ENCODE measurements at regions of chr17 and their contacts with region 1.

Region 1: DNA sequence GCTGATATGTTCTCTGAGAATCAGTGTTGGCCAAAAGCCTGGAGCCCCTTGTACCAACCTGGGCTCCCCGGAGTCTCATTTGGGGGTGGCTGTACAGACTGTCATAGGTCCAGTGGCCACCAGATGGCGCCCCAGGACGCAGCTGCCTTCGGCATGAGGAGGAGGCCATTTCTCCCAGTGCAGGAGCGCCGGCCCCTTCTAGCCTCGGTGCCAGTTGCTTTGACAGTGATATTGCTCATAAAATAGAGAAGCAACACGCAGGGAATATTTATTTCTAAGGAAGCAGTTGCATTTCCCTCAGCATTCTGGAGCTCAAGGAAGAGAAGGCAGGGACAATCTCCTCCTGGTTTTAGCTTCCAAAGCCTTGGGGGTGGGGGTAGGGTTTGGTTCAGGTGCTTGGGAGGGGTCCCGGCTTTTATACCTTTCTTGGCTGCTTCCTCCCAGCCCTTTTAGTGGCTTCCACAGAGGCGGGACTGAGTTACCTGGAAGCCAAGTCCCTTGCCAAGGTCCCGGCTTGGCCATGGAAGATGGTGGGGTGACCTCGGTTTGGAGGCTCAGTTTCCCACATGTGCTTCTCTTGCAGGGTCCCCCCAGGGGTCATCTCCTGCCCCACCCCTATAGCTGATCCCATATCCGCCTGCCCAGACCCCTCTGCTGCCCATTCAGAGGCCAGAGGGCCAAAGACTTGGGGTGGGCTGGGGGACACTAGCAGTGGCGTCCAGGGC is 117.8 kb upstream of the CDC42EP4 start:
- H3K4me3 ChIP-seq: no peak overlapping the region
- H3K27ac ChIP-seq: no peak overlapping the region
- H3K4me1 ChIP-seq: peaks cover 6% of the 10 kb centered on the region
- CTCF ChIP-seq: peak; percentile 83

Region 2: GRCh38 chr17:73410586-73411312 is 18.9 kb before region 1 on chr17:
- CTCF ChIA-PET with region 1: interaction called, 13 read pairs
- POLR2A ChIA-PET with region 1: no interaction called
- H3K4me3 ChIP-seq: no peak overlapping the region
- H3K27ac ChIP-seq: no peak overlapping the region
- H3K4me1 ChIP-seq: no peaks in the 10 kb centered on the region
- CTCF ChIP-seq: no peak

Region 3: DNA sequence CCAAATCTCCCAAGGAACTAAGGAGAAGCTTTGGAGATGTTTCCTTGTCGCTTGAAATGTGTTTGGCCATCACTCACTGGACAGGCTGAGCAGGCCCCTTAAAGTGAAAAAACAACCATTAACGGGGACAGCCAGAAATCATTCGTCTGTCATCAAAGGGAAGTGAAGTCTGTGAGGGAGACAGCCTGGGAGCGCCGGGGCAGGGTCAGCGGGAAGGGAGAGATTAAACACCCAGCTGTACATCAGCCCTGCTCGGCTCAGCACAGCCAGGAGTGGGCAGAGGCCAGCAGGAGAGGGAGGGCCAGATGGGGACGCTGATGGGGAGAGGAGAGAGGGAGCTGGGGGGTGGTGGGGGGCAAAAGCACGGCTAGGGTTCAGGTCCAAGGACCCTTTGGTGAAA is 109.6 kb after region 1 on chr17:
- CTCF ChIA-PET with region 1: no interaction called
- POLR2A ChIA-PET with region 1: no interaction called
- H3K4me3 ChIP-seq: no peak overlapping the region
- H3K27ac ChIP-seq: no peak overlapping the region
- H3K4me1 ChIP-seq: no peaks in the 10 kb centered on the region; the same call in 1 of the 2 replicates
- CTCF ChIP-seq: no peak

Region 4: GRCh38 chr17:73580073-73580710 is 150.6 kb after region 1 on chr17:
- CTCF ChIA-PET with region 1: interaction called, 16 read pairs
- POLR2A ChIA-PET with region 1: no interaction called
- H3K4me3 ChIP-seq: no peak overlapping the region
- H3K27ac ChIP-seq: no peak overlapping the region
- H3K4me1 ChIP-seq: peaks cover 3% of the 10 kb centered on the region; the same call in 1 of the 2 replicates
- CTCF ChIP-seq: no peak

Region 5: GRCh38 chr17:73645050-73645978 is 215.7 kb after region 1 on chr17:
- CTCF ChIA-PET with region 1: interaction called, 21 read pairs
- POLR2A ChIA-PET with region 1: interaction called, 3 read pairs
- H3K4me3 ChIP-seq: peak overlapping the region; percentile 49
- H3K27ac ChIP-seq: peak overlapping the region; percentile 18; the same call in 1 of the 2 replicates
- H3K4me1 ChIP-seq: no peaks in the 10 kb centered on the region
- CTCF ChIP-seq: peak; percentile 61; the same call in 1 of the 2 replicates

Region 6: DNA sequence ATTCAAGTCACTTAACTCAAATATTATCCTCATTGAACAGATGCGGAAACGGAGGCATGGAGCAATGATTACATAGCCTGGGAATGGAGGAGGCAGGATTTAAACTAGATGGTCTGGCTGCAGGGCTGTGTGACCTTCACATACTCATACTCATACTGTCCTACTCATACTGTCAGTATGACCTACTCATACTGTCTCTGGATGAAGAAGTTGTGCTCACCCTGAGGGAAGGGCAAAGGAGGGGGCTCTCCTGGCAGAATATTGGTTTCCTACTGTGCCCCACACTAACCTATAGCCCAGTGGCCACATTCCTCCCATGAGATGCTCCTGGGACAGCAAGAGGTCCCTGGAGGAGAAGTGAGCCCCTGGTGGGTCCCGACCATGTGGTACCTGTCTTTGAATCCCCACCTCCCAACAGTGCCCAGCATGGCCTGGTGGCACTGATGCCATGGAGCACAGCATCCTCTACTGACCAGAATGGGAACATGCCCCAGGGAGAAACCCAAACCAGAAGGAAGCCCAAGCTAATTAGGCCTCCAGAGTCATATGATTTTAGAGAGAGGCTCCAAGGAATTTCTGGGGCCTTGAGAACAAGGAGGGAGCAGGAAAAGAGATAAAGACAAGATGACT is 411.9 kb after region 1 on chr17:
- CTCF ChIA-PET with region 1: interaction called, 11 read pairs
- POLR2A ChIA-PET with region 1: no interaction called
- H3K4me3 ChIP-seq: no peak overlapping the region
- H3K27ac ChIP-seq: no peak overlapping the region
- H3K4me1 ChIP-seq: no peaks in the 10 kb centered on the region
- CTCF ChIP-seq: peak; percentile 84

Region 7: DNA sequence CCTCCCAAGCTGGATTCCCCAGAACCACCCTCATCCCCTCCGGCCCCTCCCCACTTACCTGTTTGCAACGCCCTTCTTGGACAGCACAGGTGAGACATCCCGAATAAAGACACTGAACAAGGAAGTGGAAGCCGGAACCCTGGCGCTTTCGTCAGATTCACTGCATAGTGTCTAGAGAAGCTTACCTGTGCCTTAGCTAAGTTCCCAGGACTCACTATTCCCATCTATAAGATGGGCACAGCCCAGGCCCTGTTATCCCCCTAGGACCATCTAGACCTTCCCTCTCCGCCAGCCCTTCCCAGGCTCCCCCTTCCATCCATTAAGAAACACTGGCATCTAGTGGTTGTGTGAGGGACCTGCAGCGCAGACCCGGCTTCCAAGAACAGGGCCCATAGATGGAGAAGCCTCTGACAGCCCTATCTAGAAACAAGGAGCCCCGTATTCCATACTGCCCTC is 747.0 kb after region 1 on chr17:
- CTCF ChIA-PET with region 1: interaction called, 18 read pairs
- POLR2A ChIA-PET with region 1: no interaction called
- H3K4me3 ChIP-seq: no peak overlapping the region
- H3K27ac ChIP-seq: no peak overlapping the region
- H3K4me1 ChIP-seq: no peaks in the 10 kb centered on the region; the same call in 1 of the 2 replicates
- CTCF ChIP-seq: peak; percentile 74

Measured in HEK293 (cell line).